Transverse colon (tissue), 4 donors: ENCODE measurements at regions of chr7 and their contacts with region 1.

Region 1: DNA sequence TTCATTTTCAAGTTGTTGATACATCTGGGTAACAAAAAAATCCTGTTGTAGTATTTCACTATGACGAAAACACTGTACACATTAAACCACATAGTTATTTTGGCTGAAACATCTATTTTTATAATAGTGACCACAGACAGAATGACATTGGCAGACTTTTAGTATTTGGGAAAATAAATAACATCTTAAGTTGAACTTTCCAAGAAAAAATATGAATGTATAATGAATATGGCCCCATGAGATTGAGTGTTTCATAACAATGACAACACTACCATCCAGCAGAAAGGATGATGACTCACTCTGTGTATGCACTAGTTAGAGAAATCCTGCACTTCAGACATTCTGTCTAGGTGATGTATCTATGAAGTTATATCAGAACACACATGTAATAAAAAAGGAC is 118.1 kb downstream of the SEMA3D start:
- DNase-seq: no peak
- H3K4me3 ChIP-seq: no peak overlapping the region
- H3K27ac ChIP-seq: no peak overlapping the region
- H3K4me1 ChIP-seq: no peaks in the 10 kb centered on the region
- H3K27me3 ChIP-seq: no peaks in the 10 kb centered on the region
- CTCF ChIP-seq: no peak
- EP300 ChIP-seq: no peak
- POLR2A ChIP-seq: no peak

Region 2: GRCh38 chr7:85851571-85852193 is 782.9 kb after region 1 on chr7:
- in situ Hi-C with region 1: loop called in 2 of 4 experiments (anchors 25 kb)
- intact Hi-C with region 1: no loop called
- DNase-seq: no peak
- H3K4me3 ChIP-seq: no peak overlapping the region
- H3K27ac ChIP-seq: no peak overlapping the region
- H3K4me1 ChIP-seq: no peaks in the 10 kb centered on the region
- H3K27me3 ChIP-seq: no peaks in the 10 kb centered on the region
- CTCF ChIP-seq: peak in 4 of 5 experiments; percentile 9 to 31 (median 23)
- EP300 ChIP-seq: no peak
- POLR2A ChIP-seq: no peak

Region 3: DNA sequence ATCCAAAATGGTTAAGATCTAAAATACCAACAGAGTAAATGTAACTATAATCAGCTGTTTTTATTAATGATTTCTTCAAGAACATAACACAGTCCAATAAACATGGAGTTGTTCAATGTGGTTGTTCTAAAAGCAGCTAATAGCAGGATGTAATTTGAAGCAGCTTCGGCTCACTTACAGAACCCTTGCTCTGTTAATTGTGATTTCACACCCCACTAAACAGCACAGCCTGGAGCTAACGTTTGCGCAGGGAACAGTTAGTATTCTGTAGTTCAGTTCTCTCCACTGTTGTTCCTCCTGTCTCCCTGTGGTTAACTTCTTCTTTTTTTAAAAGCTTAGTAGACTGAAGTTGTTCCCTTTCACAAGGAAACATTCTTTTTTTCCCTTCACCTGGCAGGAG is 1678.9 kb after region 1 on chr7:
- in situ Hi-C with region 1: no loop called
- intact Hi-C with region 1: no loop called
- DNase-seq: no peak
- H3K4me3 ChIP-seq: no peak overlapping the region
- H3K27ac ChIP-seq: no peak overlapping the region
- H3K4me1 ChIP-seq: no peaks in the 10 kb centered on the region
- H3K27me3 ChIP-seq: no peaks in the 10 kb centered on the region
- CTCF ChIP-seq: no peak
- EP300 ChIP-seq: no peak
- POLR2A ChIP-seq: no peak